MCF 10A (cell line): ENCODE measurements at regions of chr4 and their contacts with region 1.

Region 1: GRCh38 chr4:184168406-184169019 is 49.2 kb downstream of the ENPP6 start:
- DNase-seq: peak; percentile 61
- H3K4me3 Mint-ChIP-seq: no peak overlapping the region
- H3K27ac Mint-ChIP-seq: no peak overlapping the region
- H3K4me1 Mint-ChIP-seq: no peaks in the 10 kb centered on the region
- H3K27me3 Mint-ChIP-seq: no peaks in the 10 kb centered on the region
- CTCF ChIP-seq: peak; percentile 95

Region 2: GRCh38 chr4:183840311-183840710 is 328.2 kb before region 1 on chr4:
- CTCF ChIA-PET with region 1: interaction called, 98 read pairs
- POLR2A ChIA-PET with region 1: interaction called, 3 read pairs
- intact Hi-C with region 1: loop called (anchors 1 kb)
- DNase-seq: peak; percentile 81
- H3K4me3 Mint-ChIP-seq: no peak overlapping the region
- H3K27ac Mint-ChIP-seq: no peak overlapping the region
- H3K4me1 Mint-ChIP-seq: no peaks in the 10 kb centered on the region
- H3K27me3 Mint-ChIP-seq: no peaks in the 10 kb centered on the region
- CTCF ChIP-seq: peak; percentile 79

Region 3: GRCh38 chr4:184122631-184123408 is 45.7 kb before region 1 on chr4:
- CTCF ChIA-PET with region 1: no interaction called
- POLR2A ChIA-PET with region 1: no interaction called
- intact Hi-C with region 1: no loop called
- DNase-seq: no peak
- H3K4me3 Mint-ChIP-seq: no peak overlapping the region
- H3K27ac Mint-ChIP-seq: no peak overlapping the region
- H3K4me1 Mint-ChIP-seq: no peaks in the 10 kb centered on the region
- H3K27me3 Mint-ChIP-seq: peaks cover 8% of the 10 kb centered on the region
- CTCF ChIP-seq: no peak

Region 4: GRCh38 chr4:184228056-184228705 is 59.7 kb after region 1 on chr4:
- CTCF ChIA-PET with region 1: no interaction called
- POLR2A ChIA-PET with region 1: no interaction called
- intact Hi-C with region 1: no loop called
- DNase-seq: no peak
- H3K4me3 Mint-ChIP-seq: no peak overlapping the region
- H3K27ac Mint-ChIP-seq: no peak overlapping the region
- H3K4me1 Mint-ChIP-seq: no peaks in the 10 kb centered on the region
- H3K27me3 Mint-ChIP-seq: no peaks in the 10 kb centered on the region
- CTCF ChIP-seq: no peak